Activated T-helper 2 cell treated with anti-CD3 and anti-CD28 coated beads, Interferon-gamma antibody, Interleukin-2, Interleukin-4, amounts not matched to agents 10 μg/mL and 5 μg/mL and 100 μg/mL, durations not matched to agents 14 hours and 24 hours and 36 hours (primary cell): ENCODE measurements at regions of chrX and their contacts with region 1.

Region 1: GRCh38 chrX:19805046-19805690 is 82.2 kb downstream of the SH3KBP1 start:
- DNase-seq: no peak
- H3K4me3 Mint-ChIP-seq: peak overlapping the region; percentile 17
- H3K27ac Mint-ChIP-seq: peak overlapping the region; percentile 60
- H3K4me1 Mint-ChIP-seq: peaks cover 49% of the 10 kb centered on the region
- H3K27me3 Mint-ChIP-seq: no peaks in the 10 kb centered on the region

Region 2: GRCh38 chrX:19776753-19777152 is 28.4 kb before region 1 on chrX:
- intact Hi-C with region 1: no loop called
- DNase-seq: peak; percentile 25
- H3K4me3 Mint-ChIP-seq: no peak overlapping the region
- H3K27ac Mint-ChIP-seq: peak overlapping the region; percentile 78
- H3K4me1 Mint-ChIP-seq: peaks cover 45% of the 10 kb centered on the region
- H3K27me3 Mint-ChIP-seq: no peaks in the 10 kb centered on the region

Region 3: DNA sequence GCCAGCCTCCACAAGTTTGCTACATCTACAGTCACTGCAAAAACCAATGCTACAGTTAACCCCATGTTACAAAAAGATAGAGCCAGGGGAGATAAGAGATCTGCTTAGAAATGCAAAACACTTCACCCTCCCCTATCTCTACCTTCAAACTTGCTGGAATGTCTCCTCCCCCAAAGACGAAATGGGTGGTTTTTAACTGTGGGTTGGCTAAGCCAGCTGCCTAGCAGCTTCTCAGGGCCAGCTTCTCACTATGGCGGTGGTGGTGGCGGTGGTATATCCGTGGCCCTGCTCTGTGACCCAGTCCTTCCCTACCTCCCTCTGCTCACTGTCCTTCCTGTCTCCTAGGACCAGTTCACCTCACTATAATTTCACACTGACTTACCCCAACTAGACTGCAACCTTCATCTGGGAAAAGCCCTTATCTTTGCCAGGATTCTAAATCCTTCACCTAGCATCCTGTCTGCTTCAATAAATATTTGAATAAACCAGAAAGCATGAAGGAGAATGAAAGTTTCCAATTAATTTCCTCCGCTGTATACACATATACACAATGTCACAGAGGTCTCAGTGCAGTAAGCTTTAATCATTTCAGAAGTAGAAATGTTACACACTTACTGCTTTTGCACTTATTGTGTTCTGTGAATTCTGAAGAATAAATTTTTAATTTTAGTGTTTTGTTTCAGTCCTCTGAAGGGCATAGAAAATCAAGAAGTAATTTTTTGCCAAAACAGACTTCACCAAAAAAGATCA is 35.9 kb after region 1 on chrX:
- intact Hi-C with region 1: loop called (anchors 2 kb)
- DNase-seq: peak; percentile 59
- H3K4me3 Mint-ChIP-seq: peak overlapping the region; percentile 68
- H3K27ac Mint-ChIP-seq: peak overlapping the region; percentile 94
- H3K4me1 Mint-ChIP-seq: peaks cover 48% of the 10 kb centered on the region
- H3K27me3 Mint-ChIP-seq: no peaks in the 10 kb centered on the region